ENCODE measurements at regions of chr3 and their contacts with region 1.

Region 1: GRCh38 chr3:14452679-14453367 is 50.4 kb downstream of the SLC6A6 start:
- DNase-seq: peak; percentile 95

Region 2: DNA sequence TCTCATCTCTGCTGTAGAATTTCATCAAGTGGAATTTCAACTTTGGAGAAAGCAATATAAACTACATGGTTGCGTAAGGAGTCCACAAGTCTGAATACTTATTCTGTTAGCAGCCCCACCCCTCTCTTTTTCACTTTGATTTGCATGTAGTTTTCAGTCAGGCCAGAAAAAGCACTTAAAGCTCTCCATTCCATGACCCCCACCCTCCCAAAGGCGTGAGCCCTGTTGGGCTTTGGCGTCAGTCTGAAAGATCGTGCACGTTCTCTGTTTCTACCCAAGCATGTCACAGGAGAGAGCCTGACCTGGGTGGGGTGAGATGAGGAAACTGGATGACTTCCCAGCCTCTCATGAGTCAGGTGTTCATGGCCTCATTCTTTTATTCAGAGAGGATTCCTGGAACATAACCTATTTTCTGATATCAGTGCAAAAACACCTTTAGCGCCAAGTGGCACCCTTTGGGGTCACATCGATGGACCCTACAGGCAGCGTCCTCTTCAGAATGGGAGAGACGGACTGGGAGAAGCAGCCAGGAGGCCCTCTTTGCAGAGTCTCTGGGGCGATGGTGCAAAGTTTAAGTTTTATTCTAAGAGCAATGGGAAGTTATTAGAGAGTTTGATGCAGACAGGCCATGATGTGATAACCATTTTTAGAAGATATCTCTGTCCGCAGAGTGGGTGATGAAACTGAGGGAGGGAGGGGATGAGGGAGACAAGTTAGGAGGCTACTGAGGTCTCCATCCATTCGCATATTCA is 218.4 kb before region 1 on chr3:
- intact Hi-C with region 1: loop called (anchors 10 kb)
- DNase-seq: peak; percentile 73

Region 3: DNA sequence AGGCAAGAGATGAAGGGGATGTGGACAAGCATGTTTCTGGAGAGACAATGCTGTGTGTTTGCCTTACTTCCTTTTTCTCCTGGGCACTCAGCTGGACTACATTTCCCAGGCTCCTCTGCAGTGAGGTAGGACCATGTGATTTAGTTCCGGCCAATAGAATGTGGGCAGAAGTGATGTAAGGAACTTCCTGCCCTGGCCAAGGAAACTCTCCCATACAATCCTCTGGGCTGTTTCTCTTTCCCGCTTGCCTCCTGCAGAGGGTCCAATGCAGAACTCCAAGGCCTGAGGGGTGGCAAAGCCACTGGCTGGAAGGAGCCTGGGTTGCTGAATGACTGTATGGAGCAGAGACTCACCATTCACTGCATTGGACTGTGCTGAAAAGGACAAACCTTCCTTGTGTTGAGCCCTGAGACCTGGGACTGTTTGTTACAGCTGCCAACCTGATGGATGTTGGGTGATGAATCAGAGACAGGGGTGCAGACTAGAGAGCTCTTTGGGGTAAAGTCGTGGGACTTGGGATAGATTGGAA is 133.1 kb before region 1 on chr3:
- intact Hi-C with region 1: no loop called
- DNase-seq: no peak

Region 4: DNA sequence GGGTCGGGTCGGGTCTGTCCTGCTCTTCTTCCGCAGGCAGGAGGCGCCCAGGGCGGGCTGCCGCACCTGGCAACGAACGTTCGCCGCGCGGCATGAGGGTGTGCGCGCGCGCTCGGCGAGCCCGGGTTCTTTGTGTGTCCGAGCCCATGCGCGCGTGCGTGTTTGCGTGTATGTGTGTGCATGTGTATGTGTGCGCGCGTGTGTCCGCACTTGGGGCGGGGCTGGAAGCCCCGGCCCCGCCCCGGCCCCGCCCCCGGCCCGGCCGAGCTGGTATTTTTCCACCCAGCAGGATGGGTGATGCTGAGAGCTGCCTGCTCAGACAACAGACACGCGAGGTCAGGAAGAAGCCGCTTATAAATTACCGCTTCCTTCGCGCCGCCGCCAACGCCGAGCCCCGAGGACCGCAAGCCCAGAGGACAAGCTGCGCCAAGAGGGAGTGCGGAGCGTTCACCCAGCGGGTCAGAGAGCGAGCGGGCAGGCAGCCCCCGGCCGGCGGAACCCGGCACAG is 50.5 kb before region 1 on chr3 and contains the start of gene SLC6A6:
- intact Hi-C with region 1: loop called (anchors 5 kb)
- DNase-seq: peak; percentile 97
- total RNA-seq, gene SLC6A6: 129 TPM

Region 5: DNA sequence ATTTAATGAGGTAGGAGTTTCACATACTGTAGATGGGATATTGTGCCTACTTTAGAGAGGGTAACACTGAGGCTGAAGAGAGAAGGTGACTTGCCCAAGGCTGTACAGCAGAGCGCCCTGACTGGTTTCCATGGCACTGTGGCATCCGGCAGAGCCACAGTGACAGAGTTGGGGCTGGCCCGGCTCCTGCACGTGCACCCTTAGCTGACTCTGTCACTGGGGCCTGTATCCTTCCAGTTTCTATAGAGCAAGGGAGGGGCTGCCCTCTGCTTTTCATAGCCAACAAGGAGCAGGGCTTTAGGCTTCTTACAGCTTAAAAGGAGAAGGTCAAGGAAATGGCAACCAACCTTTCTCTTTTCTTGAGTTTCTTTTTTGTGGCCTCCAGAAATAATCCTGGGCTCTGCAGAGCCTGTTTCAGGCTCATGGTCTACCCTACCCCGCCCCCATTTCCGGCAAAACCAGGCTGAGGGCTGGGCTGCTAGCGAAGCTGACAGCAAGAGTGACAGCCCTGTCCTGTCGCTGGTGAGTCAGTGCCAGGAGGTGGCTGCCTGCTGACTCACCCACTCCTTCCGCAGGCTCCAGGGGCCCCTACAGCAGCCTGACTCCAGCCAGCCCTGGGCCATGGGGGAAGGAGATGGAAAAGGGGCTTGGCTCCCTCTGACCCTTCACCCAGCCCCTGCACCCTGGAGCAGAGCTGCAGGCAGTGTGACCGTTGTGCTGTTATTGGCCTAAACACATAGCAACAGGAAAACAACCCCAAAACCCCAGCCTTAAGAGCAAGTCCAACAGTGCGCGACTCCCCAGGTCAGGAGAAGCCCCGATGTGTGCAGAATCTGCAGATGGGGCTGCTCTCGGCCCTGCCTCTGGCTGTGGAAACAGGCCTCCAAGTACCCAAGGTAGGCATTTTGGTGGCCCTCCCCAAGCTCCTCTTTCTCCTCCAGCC is 20.7 kb before region 1 on chr3:
- intact Hi-C with region 1: loop called (anchors 2 kb)
- DNase-seq: peak; percentile 98

Region 6: GRCh38 chr3:14439579-14440518 is 13.0 kb before region 1 on chr3:
- intact Hi-C with region 1: loop called (anchors 1 kb)
- DNase-seq: peak; percentile 92

Region 7: GRCh38 chr3:14921078-14921616 is 468.3 kb after region 1 on chr3:
- intact Hi-C with region 1: no loop called
- DNase-seq: peak; percentile 94

Measured in cardiac septum (tissue), 1 donor.